CD4-positive, alpha-beta T cell (primary cell): ENCODE measurements at regions of chr3 and their contacts with region 1.

Region 1: GRCh38 chr3:132416807-132417694 is at the start of gene DNAJC13:
- DNase-seq: peak; percentile 81 to 98 (median 89)
- ATAC-seq: peak; percentile 93
- H3K4me3 ChIP-seq: peak within 1 kb of the TSS; percentile 91
- H3K4me3 Mint-ChIP-seq: peak within 1 kb of the TSS; percentile 97
- H3K27ac ChIP-seq: peak within 1 kb of the TSS; percentile 76 to 81
- H3K27ac Mint-ChIP-seq: peak within 1 kb of the TSS; percentile 91
- H3K4me1 ChIP-seq: peaks cover 12% of the 10 kb centered on the region
- H3K4me1 Mint-ChIP-seq: peaks cover 34% of the 10 kb centered on the region
- H3K27me3 ChIP-seq: no peaks in the 10 kb centered on the region
- H3K27me3 Mint-ChIP-seq: no peaks in the 10 kb centered on the region
- CTCF ChIP-seq: no peak
- total RNA-seq, gene DNAJC13: 13.5 to 14.3 TPM

Region 2: GRCh38 chr3:130746246-130747039 is 1670.6 kb before region 1 on chr3 and contains the start of gene PIK3R4:
- CTCF ChIA-PET with region 1: no interaction called
- POLR2A ChIA-PET with region 1: no interaction called
- intact Hi-C with region 1: loop called in 1 of 2 experiments (anchors 5 kb)
- DNase-seq: peak; percentile 84 to 99 (median 90)
- ATAC-seq: peak; percentile 81
- H3K4me3 ChIP-seq: peak within 1 kb of the TSS; percentile 90
- H3K4me3 Mint-ChIP-seq: peak within 1 kb of the TSS; percentile 90
- H3K27ac ChIP-seq: peak within 1 kb of the TSS; percentile 81 to 95
- H3K27ac Mint-ChIP-seq: peak within 1 kb of the TSS; percentile 93
- H3K4me1 ChIP-seq: peaks cover 31% of the 10 kb centered on the region
- H3K4me1 Mint-ChIP-seq: peaks cover 58% of the 10 kb centered on the region
- H3K27me3 ChIP-seq: no peaks in the 10 kb centered on the region
- H3K27me3 Mint-ChIP-seq: no peaks in the 10 kb centered on the region
- CTCF ChIP-seq: no peak
- total RNA-seq, gene PIK3R4: 13.7 to 14.5 TPM

Region 3: DNA sequence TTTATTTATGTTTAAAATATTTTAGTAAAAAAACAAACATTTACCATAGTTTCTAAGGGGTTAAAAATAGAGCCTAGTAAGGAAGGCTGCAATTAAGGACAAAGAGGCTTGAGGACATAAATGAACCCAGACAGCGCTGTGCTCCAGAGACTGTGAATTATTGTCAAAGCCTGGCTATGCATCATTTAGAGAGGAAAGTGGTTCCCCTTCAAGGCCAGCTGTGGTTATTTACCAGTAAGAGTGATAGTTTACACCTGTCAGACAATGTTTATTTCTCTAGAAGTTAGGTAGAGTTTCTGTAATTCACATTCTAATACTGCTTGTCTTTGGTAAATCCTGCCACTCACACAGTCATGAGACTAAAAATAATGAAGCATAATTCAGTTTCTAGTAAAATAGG is 1638.0 kb before region 1 on chr3:
- CTCF ChIA-PET with region 1: no interaction called
- POLR2A ChIA-PET with region 1: no interaction called
- intact Hi-C with region 1: no loop called
- DNase-seq: no peak
- ATAC-seq: no peak
- H3K4me3 ChIP-seq: no peak overlapping the region
- H3K4me3 Mint-ChIP-seq: no peak overlapping the region
- H3K27ac ChIP-seq: no peak overlapping the region
- H3K27ac Mint-ChIP-seq: no peak overlapping the region
- H3K4me1 ChIP-seq: no peaks in the 10 kb centered on the region
- H3K4me1 Mint-ChIP-seq: no peaks in the 10 kb centered on the region
- H3K27me3 ChIP-seq: no peaks in the 10 kb centered on the region
- H3K27me3 Mint-ChIP-seq: no peaks in the 10 kb centered on the region
- CTCF ChIP-seq: no peak

Region 4: GRCh38 chr3:131381444-131382291 is 1035.4 kb before region 1 on chr3 and contains the start of gene NUDT16:
- CTCF ChIA-PET with region 1: no interaction called
- POLR2A ChIA-PET with region 1: interaction called, 4 read pairs
- intact Hi-C with region 1: loop called in 1 of 2 experiments (anchors 10 kb)
- DNase-seq: peak; percentile 91 to 98 (median 96)
- ATAC-seq: peak; percentile 96
- H3K4me3 ChIP-seq: peak within 1 kb of the TSS; percentile 98
- H3K4me3 Mint-ChIP-seq: peak within 1 kb of the TSS; percentile 98
- H3K27ac ChIP-seq: peak within 1 kb of the TSS in 1 of 2 donors; percentile 11
- H3K27ac Mint-ChIP-seq: peak within 1 kb of the TSS; percentile 91
- H3K4me1 ChIP-seq: peaks cover 36% of the 10 kb centered on the region
- H3K4me1 Mint-ChIP-seq: peaks cover 48% of the 10 kb centered on the region
- H3K27me3 ChIP-seq: no peaks in the 10 kb centered on the region
- H3K27me3 Mint-ChIP-seq: no peaks in the 10 kb centered on the region
- CTCF ChIP-seq: peak; percentile 14
- total RNA-seq, gene NUDT16: 4.7 to 5.7 TPM

Region 5: DNA sequence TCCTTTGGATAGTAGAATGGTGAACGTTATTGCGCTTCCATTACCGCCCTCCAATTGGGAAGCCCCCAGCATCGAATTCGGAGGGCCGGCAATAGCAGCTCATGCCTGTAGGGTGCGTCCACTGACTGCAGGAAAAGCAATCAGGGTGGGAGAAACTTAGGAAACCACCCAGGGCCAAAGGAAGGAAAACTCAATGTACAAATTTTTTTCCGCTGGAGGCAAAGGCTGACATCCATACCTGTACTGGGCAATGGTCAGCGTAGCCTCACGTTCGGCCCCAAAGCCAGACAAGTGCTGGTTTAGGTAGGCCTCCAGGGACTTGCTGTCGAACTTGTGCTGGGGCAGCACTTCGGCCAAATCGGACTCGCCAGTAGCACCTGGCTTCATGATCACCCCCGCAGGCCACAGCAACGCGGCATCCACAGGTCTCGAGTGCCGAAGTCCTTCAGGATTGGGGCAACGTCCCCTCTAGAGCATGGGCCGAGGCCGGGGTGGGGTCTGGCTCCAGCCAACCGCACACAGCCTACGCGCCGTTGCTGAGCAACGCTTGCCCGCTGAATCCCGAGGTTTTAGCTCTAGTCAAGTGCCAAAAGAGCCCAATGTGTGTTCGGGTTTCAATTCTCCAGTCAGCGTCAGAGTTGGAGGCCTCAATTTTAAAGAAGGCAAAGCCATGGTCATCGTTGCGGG is 242.5 kb after region 1 on chr3 and contains the start of gene ACAD11:
- CTCF ChIA-PET with region 1: interaction called, 3 read pairs
- POLR2A ChIA-PET with region 1: interaction called, 5 read pairs
- intact Hi-C with region 1: loop called in 1 of 2 experiments (anchors 5 kb)
- DNase-seq: peak in 13 of 14 experiments; percentile 2 to 59 (median 13)
- ATAC-seq: peak; percentile 16
- H3K4me3 ChIP-seq: peak within 1 kb of the TSS; percentile 93
- H3K4me3 Mint-ChIP-seq: peak within 1 kb of the TSS; percentile 100
- H3K27ac ChIP-seq: peak within 1 kb of the TSS; percentile 41 to 62
- H3K27ac Mint-ChIP-seq: peak within 1 kb of the TSS; percentile 98
- H3K4me1 ChIP-seq: peaks cover 8% of the 10 kb centered on the region
- H3K4me1 Mint-ChIP-seq: peaks cover 77% of the 10 kb centered on the region
- H3K27me3 ChIP-seq: no peaks in the 10 kb centered on the region
- H3K27me3 Mint-ChIP-seq: no peaks in the 10 kb centered on the region
- CTCF ChIP-seq: peak; percentile 40
- total RNA-seq, gene ACAD11: 26.6 to 27.9 TPM

Region 6: DNA sequence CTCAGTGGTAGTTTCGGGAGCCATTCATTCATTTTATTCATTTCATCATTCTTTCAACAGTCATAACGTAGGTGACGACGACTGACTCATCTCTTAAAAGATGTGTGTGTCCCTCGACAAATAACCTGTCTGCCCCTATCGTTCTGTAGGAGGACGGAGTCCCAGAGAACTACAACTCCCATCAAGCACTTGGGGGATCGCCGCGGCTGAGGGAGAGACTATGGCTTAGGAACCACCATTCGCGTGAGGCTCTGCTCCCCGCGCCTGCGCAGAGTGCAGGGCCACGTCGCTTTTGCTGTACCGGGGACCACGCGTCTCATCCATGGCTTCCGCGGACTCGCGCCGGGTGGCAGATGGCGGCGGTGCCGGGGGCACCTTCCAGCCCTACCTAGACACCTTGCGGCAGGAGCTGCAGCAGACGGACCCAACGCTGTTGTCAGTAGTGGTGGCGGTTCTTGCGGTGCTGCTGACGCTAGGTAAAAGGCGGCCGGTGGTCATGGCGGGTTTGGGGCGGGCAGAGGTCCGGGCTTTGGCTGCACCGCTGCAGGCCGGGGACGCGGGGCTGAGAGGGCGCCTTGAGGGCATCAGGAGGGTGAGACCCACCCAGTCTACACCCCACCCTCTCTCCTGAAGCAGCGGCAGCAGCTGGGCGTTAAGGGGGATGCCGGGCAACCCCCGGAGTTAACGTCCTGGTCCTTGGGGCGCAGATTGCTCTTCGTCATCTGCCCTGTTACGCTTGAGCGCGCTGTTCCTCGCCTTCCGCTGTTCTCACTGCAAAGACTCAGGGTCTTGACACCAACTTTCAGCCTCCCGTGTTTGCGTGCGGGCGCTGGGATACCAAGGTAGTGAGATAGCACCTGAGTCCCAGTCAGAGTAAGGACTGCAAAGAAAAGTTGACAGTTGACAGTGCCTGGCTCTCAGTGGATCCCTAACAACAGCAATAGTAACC is 1388.8 kb after region 1 on chr3 and contains the start of gene SRPRB:
- CTCF ChIA-PET with region 1: no interaction called
- POLR2A ChIA-PET with region 1: no interaction called
- intact Hi-C with region 1: loop called in 1 of 2 experiments (anchors 2 kb)
- DNase-seq: peak; percentile 90 to 99 (median 94)
- ATAC-seq: peak; percentile 95
- H3K4me3 ChIP-seq: peak within 1 kb of the TSS; percentile 92
- H3K4me3 Mint-ChIP-seq: peak within 1 kb of the TSS; percentile 97
- H3K27ac ChIP-seq: peak within 1 kb of the TSS; percentile 70 to 75
- H3K27ac Mint-ChIP-seq: peak within 1 kb of the TSS; percentile 94
- H3K4me1 ChIP-seq: peaks cover 16% of the 10 kb centered on the region
- H3K4me1 Mint-ChIP-seq: peaks cover 40% of the 10 kb centered on the region
- H3K27me3 ChIP-seq: no peaks in the 10 kb centered on the region
- H3K27me3 Mint-ChIP-seq: no peaks in the 10 kb centered on the region
- CTCF ChIP-seq: no peak
- total RNA-seq, gene SRPRB: 19.1 to 19.9 TPM